Dorsolateral prefrontal cortex (tissue), 120 donors: ENCODE measurements at regions of chr14 and their contacts with region 1.

Region 1: GRCh38 chr14:75972801-75973421 is 8.9 kb downstream of the TGFB3 start:
- DNase-seq: peak in 1 of 10 donors; percentile 38
- H3K4me3 ChIP-seq: no peak overlapping the region
- H3K27ac ChIP-seq: peak overlapping the region in 14 of 59 donors; percentile 5 to 54 (median 20)
- H3K27me3 ChIP-seq: no peaks in the 10 kb centered on the region
- CTCF ChIP-seq: no peak

Region 2: DNA sequence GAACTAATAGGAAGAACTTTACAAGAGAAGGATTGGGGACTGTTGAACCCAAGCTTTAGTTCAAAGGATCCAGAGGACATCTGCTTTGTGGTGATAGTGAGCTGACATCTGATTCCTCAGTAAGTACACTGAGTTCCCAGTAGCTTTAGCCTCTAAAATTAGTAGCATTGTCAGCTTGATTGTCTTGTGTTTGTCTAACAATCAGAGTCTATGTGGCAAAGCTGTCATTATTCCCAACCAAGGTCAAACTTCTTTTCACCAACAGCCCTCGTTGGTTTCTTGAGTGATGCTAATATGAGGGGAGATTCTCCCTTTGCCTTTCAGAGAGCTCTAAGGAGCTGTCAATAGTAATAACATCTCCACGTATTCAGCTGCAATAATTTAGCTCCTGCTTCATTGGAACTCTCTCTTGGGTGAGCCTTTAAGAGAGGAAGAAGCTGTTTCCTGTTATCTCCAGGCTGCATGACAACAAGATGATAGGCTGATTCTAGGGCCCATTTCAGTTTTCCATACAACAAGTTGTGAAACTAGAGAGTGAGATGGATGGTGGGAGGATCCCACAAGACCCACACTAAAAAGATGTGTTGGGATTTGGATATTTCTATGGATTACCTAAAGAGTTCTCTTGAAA is 37.8 kb before region 1 on chr14:
- intact Hi-C with region 1: loop called in 1 of 2 experiments (anchors 5 kb)
- DNase-seq: no peak
- H3K4me3 ChIP-seq: peak overlapping the region in 1 of 59 donors; percentile 25
- H3K27ac ChIP-seq: peak overlapping the region; percentile 20 to 99 (median 92)
- H3K27me3 ChIP-seq: no peaks in the 10 kb centered on the region
- CTCF ChIP-seq: peak in 2 of 56 donors; percentile 9 to 14